Vagina (tissue), 2 donors: ENCODE measurements at regions of chr3 and their contacts with region 1.

Region 1: GRCh38 chr3:8970971-8971589 is 7.8 kb upstream of the RAD18 start:
- DNase-seq: no peak
- H3K4me3 ChIP-seq: no peak overlapping the region
- H3K27ac ChIP-seq: no peak overlapping the region
- H3K4me1 ChIP-seq: no peaks in the 10 kb centered on the region
- H3K27me3 ChIP-seq: peaks cover 4% of the 10 kb centered on the region
- CTCF ChIP-seq: peak; percentile 96 to 98 (median 97)
- POLR2A ChIP-seq: no peak

Region 2: GRCh38 chr3:7546253-7546652 is 1424.8 kb before region 1 on chr3:
- intact Hi-C with region 1: no loop called
- DNase-seq: no peak
- H3K4me3 ChIP-seq: no peak overlapping the region
- H3K27ac ChIP-seq: no peak overlapping the region
- H3K4me1 ChIP-seq: no peaks in the 10 kb centered on the region
- H3K27me3 ChIP-seq: no peaks in the 10 kb centered on the region
- CTCF ChIP-seq: no peak
- POLR2A ChIP-seq: no peak

Region 3: DNA sequence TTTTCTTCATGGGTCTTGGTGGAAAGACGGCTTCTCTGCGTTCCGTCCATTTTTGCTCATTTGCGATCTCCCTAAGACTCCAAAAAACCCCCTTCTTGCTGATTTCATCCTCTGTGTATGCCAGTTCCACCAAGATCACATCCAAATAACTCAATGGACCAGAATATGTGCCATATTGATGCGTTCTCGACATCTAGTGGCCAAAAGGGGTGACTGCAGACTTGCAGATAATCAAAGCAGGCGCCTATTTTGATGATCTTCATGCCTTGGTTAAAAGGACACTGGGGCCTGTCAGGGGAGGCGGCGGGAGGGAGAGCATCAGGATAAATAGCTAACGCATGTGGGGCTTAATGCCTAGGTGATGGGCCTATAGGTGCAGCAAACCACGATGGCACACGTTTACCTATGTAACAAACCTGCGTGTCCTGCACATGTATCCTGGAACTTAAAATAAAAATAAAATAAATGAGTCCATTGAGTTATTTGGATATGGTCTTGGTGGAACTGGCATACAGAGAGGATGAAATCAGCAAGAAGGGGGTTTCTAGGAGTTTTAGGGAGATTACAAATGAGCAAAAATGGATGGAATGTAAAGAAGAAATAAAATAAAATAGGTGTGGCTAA is 96.4 kb after region 1 on chr3:
- intact Hi-C with region 1: loop called (anchors 5 kb)
- DNase-seq: no peak
- H3K4me3 ChIP-seq: no peak overlapping the region
- H3K27ac ChIP-seq: no peak overlapping the region
- H3K4me1 ChIP-seq: no peaks in the 10 kb centered on the region
- H3K27me3 ChIP-seq: no peaks in the 10 kb centered on the region
- CTCF ChIP-seq: peak; percentile 30 to 73 (median 65)
- POLR2A ChIP-seq: no peak

Region 4: GRCh38 chr3:9302425-9303181 is 331.5 kb after region 1 on chr3:
- intact Hi-C with region 1: loop called (anchors 5 kb)
- DNase-seq: no peak
- H3K4me3 ChIP-seq: peak overlapping the region; percentile 14 to 34
- H3K27ac ChIP-seq: no peak overlapping the region
- H3K4me1 ChIP-seq: peaks cover 5% of the 10 kb centered on the region
- H3K27me3 ChIP-seq: no peaks in the 10 kb centered on the region
- CTCF ChIP-seq: peak; percentile 85 to 91 (median 87)
- POLR2A ChIP-seq: no peak